ENCODE measurements at regions of chr5 and their contacts with region 1.

Region 1: GRCh38 chr5:147822686-147823491 is 8.6 kb downstream of the SPINK1 start:
- DNase-seq: peak; percentile 28 to 92 (median 50)

Region 2: DNA sequence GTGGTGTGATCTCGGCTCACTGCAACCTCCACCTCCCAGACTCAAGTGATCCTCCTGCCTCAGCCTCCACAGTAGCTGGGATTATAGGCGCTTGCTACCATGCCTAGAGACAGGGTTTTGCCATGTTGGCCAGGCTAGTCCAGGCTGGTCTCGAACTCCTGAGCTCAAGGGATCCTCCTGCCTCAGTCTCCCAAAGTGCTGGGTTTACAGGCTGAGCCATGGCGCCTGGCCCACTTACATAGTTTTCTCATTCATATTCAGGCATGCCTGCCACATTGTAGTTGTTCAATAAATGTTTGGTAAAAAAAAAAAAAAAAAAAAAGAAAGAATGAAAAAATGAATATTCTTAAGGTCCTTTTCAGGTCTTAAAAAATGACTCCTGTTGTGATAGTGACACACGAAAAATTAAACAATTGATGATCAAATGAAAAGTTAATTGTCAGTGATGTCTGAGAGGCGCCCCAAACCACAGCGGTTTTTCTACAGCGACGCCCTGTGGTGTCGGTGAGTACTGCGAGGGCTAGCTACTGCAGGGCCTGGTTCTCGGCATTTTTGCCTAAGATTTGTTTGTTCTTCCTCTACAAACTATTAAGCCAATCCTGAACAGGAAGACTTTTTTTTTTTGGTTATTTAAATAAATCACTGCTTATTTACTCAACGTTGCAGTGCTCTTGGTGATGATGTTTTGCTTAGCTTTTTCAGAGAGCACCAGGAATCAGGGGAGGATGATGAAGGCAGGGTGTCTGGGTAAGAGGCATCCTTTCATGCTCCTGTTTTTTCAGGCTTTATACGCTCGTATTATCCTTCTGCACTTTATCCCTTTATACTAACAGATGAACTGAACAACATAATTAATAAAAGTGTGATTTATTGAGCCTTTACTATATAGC is 246.0 kb before region 1 on chr5:
- intact Hi-C with region 1: no loop called
- DNase-seq: peak; percentile 22 to 93 (median 64)

Region 3: GRCh38 chr5:147628058-147628895 is 194.6 kb before region 1 on chr5:
- intact Hi-C with region 1: loop called (anchors 1 kb)
- DNase-seq: peak in 5 of 10 donors; percentile 17 to 73 (median 72)